SK-N-SH (cell line): ENCODE measurements at regions of chr19 and their contacts with region 1.

Region 1: DNA sequence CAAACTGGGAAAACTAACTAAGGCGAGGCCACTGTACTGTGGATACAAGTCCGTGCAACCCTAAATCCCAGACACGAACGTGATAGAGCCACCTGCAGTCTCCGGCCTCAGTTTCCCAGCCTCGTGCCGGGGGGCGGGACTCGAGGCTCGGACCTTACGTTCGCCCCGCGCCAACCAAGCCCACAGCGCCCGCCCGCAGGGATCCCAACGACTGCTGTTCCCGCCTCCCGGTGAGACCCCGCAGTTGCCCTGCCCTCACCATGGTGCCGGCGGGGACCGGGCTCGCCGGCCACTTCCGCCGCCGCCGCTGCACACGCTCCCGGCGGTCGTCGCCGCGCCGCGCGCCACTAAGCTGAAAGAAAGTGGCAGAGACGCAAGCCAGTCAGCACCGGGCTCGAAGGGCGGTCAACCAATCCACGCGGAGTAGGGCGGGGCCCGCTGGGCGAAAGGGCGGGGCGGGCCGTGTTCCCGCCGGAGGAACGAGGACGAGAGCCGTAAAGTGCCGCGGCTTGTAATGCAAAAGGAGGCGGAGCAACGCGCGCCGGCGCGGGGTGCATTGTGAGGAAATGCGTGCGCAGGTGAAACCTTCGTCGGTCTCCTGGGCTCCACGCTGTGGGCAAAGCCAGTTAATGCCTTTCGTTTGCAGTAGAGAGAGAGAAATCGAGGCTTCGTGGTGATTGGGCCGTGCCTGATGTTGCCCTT is at the start of gene LSM4:
- DNase-seq: peak; percentile 97
- H3K4me3 ChIP-seq: peak within 1 kb of the TSS; percentile 72 to 89
- H3K27ac ChIP-seq: peak within 1 kb of the TSS; percentile 88 to 93
- H3K4me1 ChIP-seq: peaks cover 19 to 30% of the 10 kb centered on the region in 2 experiments; a peak in 3 of 4 replicates
- H3K27me3 ChIP-seq: no peaks in the 10 kb centered on the region
- CTCF ChIP-seq: peak; percentile 22
- EP300 ChIP-seq: no peak; a peak in 1 of 4 replicates
- RAD21 ChIP-seq: peak; percentile 55
- polyA plus RNA-seq, gene LSM4: 235 and 277 TPM in 2 replicates

Region 2: GRCh38 chr19:18291590-18292461 is 31.1 kb before region 1 on chr19:
- CTCF ChIA-PET with region 1: interaction called, 17 read pairs
- POLR2A ChIA-PET with region 1: interaction called, 5 read pairs
- DNase-seq: peak; percentile 89
- H3K4me3 ChIP-seq: peak overlapping the region; percentile 58 to 71
- H3K27ac ChIP-seq: peak overlapping the region; percentile 72 to 94
- H3K4me1 ChIP-seq: peaks cover 8 to 22% of the 10 kb centered on the region in 2 experiments; a peak in 2 of 4 replicates
- H3K27me3 ChIP-seq: no peaks in the 10 kb centered on the region
- CTCF ChIP-seq: no peak
- EP300 ChIP-seq: peak; percentile 16 to 22; a peak in 2 of 4 replicates
- RAD21 ChIP-seq: no peak